ENCODE measurements at regions of chr12 and their contacts with region 1.

Region 1: DNA sequence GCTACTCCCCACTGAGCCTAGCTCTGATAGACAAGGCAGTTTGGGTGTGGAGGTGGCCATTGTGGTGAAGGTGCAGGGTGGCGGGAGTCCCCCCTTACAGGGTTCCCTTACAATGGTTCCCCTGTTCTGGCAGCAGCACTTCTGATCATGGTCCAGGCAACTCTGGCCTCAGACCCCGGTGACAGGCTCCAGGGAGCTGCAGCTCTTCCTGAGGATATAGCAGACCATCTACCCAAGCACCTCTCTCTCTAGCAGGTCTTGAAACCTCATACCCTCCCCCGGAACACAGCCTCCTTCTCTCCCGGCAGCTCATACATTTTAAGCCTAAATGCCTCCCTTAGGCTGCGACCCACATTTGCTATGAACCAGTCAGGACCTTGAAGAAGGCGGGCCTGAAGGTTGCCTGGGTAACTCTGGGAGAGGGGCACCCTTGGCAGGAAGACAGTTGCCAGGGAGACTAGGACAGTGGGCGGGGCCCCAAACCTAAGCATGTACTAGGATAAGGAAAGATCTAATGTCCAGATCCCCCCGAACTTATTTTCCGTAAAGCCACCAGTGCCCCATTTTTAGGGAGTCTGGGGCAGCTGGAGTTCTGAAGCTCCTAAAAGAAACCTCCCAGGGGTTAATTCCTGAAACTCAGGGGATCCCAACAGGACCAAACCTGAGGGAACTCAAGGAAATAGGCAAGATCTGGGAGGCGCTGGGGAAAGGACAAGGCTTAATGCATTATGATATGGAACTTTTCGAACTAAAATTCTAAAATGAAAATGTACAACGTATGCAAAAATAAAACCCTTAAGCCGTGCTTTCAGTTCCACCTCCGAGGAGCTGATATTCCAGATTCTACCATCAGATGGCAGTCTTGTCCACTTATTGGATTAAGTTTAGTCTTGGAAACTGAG is 4.5 kb upstream of the GDF11 start:
- DNase-seq: peak; percentile 51 to 89 (median 81)
- ATAC-seq: peak; percentile 75
- H3K4me3 ChIP-seq: peak overlapping the region; percentile 73 to 80
- H3K4me3 Mint-ChIP-seq: peak overlapping the region; percentile 90
- H3K27ac ChIP-seq: peak overlapping the region; percentile 73 to 87
- H3K27ac Mint-ChIP-seq: peak overlapping the region; percentile 93
- H3K4me1 ChIP-seq: peaks cover 22% of the 10 kb centered on the region
- H3K4me1 Mint-ChIP-seq: peaks cover 24% of the 10 kb centered on the region
- H3K27me3 ChIP-seq: no peaks in the 10 kb centered on the region
- H3K27me3 Mint-ChIP-seq: no peaks in the 10 kb centered on the region
- CTCF ChIP-seq: peak; percentile 90

Region 2: GRCh38 chr12:55548756-55549155 is 189.6 kb before region 1 on chr12:
- CTCF ChIA-PET with region 1: no interaction called
- POLR2A ChIA-PET with region 1: no interaction called
- intact Hi-C with region 1: no loop called
- DNase-seq: no peak
- ATAC-seq: no peak
- H3K4me3 ChIP-seq: no peak overlapping the region
- H3K4me3 Mint-ChIP-seq: no peak overlapping the region
- H3K27ac ChIP-seq: no peak overlapping the region
- H3K27ac Mint-ChIP-seq: no peak overlapping the region
- H3K4me1 ChIP-seq: no peaks in the 10 kb centered on the region
- H3K4me1 Mint-ChIP-seq: no peaks in the 10 kb centered on the region
- H3K27me3 ChIP-seq: peaks cover 0 to 4% of the 10 kb centered on the region in 2 experiments
- H3K27me3 Mint-ChIP-seq: peaks cover 41% of the 10 kb centered on the region
- CTCF ChIP-seq: no peak

Region 3: DNA sequence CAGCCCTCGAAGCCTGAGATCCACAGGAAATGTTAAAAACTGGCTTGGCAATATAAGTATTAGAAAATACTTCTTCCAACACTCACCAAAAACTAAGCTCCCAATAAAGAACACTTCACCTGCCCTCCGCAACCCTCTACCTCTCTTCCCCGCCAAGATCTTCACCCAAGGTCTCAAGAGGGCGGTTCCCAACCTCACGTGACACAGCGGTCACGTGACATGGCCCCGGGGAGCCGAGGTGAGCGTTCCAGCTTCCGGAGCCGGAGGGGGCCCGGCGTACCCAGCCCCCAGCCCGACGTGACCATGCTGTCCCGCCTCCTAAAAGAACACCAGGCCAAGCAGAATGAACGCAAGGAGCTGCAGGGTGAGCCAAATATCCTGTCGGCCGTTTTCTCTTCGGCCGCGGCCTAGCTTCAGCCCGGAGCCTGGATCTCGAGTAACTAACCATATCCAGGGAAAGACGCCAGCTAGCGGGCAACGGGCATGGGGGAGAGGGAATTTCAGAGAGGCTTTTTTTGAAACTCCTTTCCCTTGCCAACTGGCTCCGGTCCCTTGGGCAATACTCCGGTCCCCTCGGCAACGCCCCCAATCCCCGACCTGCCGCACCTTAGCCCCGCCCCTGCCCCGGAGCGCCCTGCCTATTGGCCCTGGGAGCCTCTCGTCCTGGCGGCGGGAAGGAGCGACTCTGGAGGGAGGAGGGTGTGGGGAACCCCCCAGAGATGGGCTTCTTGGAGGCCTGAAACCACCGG is 22.4 kb before region 1 on chr12 and contains the start of gene BLOC1S1:
- CTCF ChIA-PET with region 1: interaction called, 176 read pairs
- POLR2A ChIA-PET with region 1: interaction called, 24 read pairs
- intact Hi-C with region 1: loop called (anchors 1 to 2 kb)
- DNase-seq: peak; percentile 80 to 96 (median 92)
- ATAC-seq: peak; percentile 96
- H3K4me3 ChIP-seq: peak within 1 kb of the TSS; percentile 84 to 90
- H3K4me3 Mint-ChIP-seq: peak within 1 kb of the TSS; percentile 94
- H3K27ac ChIP-seq: peak within 1 kb of the TSS; percentile 67 to 93
- H3K27ac Mint-ChIP-seq: peak within 1 kb of the TSS; percentile 90
- H3K4me1 ChIP-seq: peaks cover 23% of the 10 kb centered on the region
- H3K4me1 Mint-ChIP-seq: peaks cover 36% of the 10 kb centered on the region
- H3K27me3 ChIP-seq: no peaks in the 10 kb centered on the region
- H3K27me3 Mint-ChIP-seq: no peaks in the 10 kb centered on the region
- CTCF ChIP-seq: no peak
- total RNA-seq, gene BLOC1S1: 29.4 to 29.6 TPM

Region 4: GRCh38 chr12:55817346-55818139 is 79.2 kb after region 1 on chr12 and contains the starts of genes ORMDL2 and SARNP:
- CTCF ChIA-PET with region 1: interaction called, 16 read pairs
- POLR2A ChIA-PET with region 1: interaction called, 18 read pairs
- intact Hi-C with region 1: loop called (anchors 1 kb)
- DNase-seq: peak; percentile 88 to 100 (median 94)
- ATAC-seq: peak; percentile 91
- H3K4me3 ChIP-seq: peak within 1 kb of the TSS; percentile 81 to 89
- H3K4me3 Mint-ChIP-seq: no peak within 1 kb of the TSS
- H3K27ac ChIP-seq: peak within 1 kb of the TSS; percentile 81 to 89
- H3K27ac Mint-ChIP-seq: no peak within 1 kb of the TSS
- H3K4me1 ChIP-seq: peaks cover 38% of the 10 kb centered on the region
- H3K4me1 Mint-ChIP-seq: peaks cover 44% of the 10 kb centered on the region
- H3K27me3 ChIP-seq: no peaks in the 10 kb centered on the region
- H3K27me3 Mint-ChIP-seq: no peaks in the 10 kb centered on the region
- CTCF ChIP-seq: no peak
- total RNA-seq, gene ORMDL2: 13.2 to 15.1 TPM
- total RNA-seq, gene SARNP: 48.0 to 50.3 TPM

Region 5: DNA sequence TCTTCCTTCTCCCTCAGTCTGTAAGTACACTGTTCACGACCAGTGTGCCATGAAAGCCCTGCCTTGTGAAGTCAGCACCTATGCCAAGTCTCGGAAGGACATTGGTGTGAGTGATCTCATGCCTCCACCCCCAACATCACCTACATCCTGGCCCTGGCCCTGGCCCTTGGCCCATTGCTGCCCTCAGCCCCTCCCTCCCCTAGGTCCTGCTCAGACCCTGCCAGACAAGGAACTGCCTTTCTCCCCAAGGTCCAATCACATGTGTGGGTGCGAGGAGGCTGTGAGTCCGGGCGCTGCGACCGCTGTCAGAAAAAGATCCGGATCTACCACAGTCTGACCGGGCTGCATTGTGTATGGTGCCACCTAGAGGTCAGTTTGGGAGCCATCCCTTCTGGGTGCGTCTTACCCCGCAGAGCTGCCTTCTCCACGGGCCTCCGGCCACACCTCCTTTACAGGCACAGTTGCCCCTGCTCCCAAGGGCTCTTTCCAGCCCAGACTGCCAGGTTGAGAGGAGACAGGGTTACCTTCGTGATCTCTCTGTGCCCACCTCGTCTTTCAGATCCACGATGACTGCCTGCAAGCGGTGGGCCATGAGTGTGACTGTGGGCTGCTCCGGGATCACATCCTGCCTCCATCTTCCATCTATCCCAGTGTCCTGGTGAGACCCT is 201.8 kb after region 1 on chr12:
- CTCF ChIA-PET with region 1: interaction called, 71 read pairs
- POLR2A ChIA-PET with region 1: interaction called, 5 read pairs
- intact Hi-C with region 1: loop called (anchors 1 kb)
- DNase-seq: peak; percentile 68 to 91 (median 87)
- ATAC-seq: peak; percentile 92
- H3K4me3 ChIP-seq: no peak overlapping the region
- H3K4me3 Mint-ChIP-seq: peak overlapping the region; percentile 52
- H3K27ac ChIP-seq: peak overlapping the region in 1 of 2 experiments; percentile 60
- H3K27ac Mint-ChIP-seq: peak overlapping the region; percentile 87
- H3K4me1 ChIP-seq: peaks cover 55% of the 10 kb centered on the region
- H3K4me1 Mint-ChIP-seq: peaks cover 84% of the 10 kb centered on the region
- H3K27me3 ChIP-seq: no peaks in the 10 kb centered on the region
- H3K27me3 Mint-ChIP-seq: no peaks in the 10 kb centered on the region
- CTCF ChIP-seq: peak; percentile 84

Region 6: DNA sequence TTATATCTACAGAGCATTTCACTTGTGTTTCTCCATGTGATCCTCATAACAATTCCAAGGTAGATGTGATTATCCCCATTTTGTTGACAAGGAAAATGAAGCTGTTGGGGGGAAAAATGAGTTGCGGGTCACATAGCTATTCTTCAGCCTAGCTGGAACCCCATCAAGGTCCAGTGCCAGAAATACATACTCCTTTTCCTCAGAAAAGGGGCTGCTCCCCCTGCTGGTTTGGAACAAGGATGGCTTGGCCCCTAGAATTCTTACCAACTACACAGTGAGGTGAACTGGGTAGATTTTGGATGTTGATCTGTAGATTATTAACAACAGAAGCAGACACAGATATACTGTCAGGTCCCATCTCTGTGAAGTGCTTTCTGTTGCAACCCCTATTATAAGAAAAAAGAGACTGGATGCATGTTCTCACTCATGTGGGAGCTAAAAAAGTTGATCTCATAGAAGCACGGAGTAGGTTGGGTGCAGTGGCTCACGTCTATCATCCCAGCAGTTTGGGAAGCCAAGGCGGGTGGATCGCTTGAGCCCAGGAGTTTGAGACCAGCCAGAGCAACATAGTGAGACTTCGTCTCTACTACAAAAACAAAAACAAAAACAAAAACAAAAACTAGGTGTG is 291.4 kb after region 1 on chr12:
- CTCF ChIA-PET with region 1: interaction called, 9 read pairs
- POLR2A ChIA-PET with region 1: no interaction called
- intact Hi-C with region 1: loop called (anchors 1 to 5 kb)
- DNase-seq: peak in 6 of 9 experiments; percentile 40 to 67 (median 53)
- ATAC-seq: peak; percentile 41
- H3K4me3 ChIP-seq: no peak overlapping the region
- H3K4me3 Mint-ChIP-seq: no peak overlapping the region
- H3K27ac ChIP-seq: no peak overlapping the region
- H3K27ac Mint-ChIP-seq: peak overlapping the region; percentile 73
- H3K4me1 ChIP-seq: peaks cover 23% of the 10 kb centered on the region
- H3K4me1 Mint-ChIP-seq: peaks cover 26% of the 10 kb centered on the region
- H3K27me3 ChIP-seq: no peaks in the 10 kb centered on the region
- H3K27me3 Mint-ChIP-seq: no peaks in the 10 kb centered on the region
- CTCF ChIP-seq: peak; percentile 63

Region 7: GRCh38 chr12:56127888-56128669 is 389.7 kb after region 1 on chr12 and contains the start of gene ESYT1:
- CTCF ChIA-PET with region 1: interaction called, 3 read pairs
- POLR2A ChIA-PET with region 1: no interaction called
- intact Hi-C with region 1: loop called in 1 of 2 experiments (anchors 10 kb)
- DNase-seq: peak; percentile 94 to 100 (median 96)
- ATAC-seq: peak; percentile 87
- H3K4me3 ChIP-seq: peak within 1 kb of the TSS; percentile 71 to 97
- H3K4me3 Mint-ChIP-seq: peak within 1 kb of the TSS; percentile 97
- H3K27ac ChIP-seq: peak within 1 kb of the TSS; percentile 79 to 86
- H3K27ac Mint-ChIP-seq: peak within 1 kb of the TSS; percentile 94
- H3K4me1 ChIP-seq: peaks cover 60% of the 10 kb centered on the region
- H3K4me1 Mint-ChIP-seq: peaks cover 64% of the 10 kb centered on the region
- H3K27me3 ChIP-seq: no peaks in the 10 kb centered on the region
- H3K27me3 Mint-ChIP-seq: no peaks in the 10 kb centered on the region
- CTCF ChIP-seq: no peak
- total RNA-seq, gene ESYT1: 82.4 to 83.0 TPM

Region 8: GRCh38 chr12:56299853-56300643 is 561.7 kb after region 1 on chr12 and contains the start of gene CS:
- CTCF ChIA-PET with region 1: no interaction called
- POLR2A ChIA-PET with region 1: no interaction called
- intact Hi-C with region 1: loop called in 1 of 2 experiments (anchors 1 kb)
- DNase-seq: peak; percentile 97 to 99 (median 99)
- ATAC-seq: peak; percentile 95
- H3K4me3 ChIP-seq: peak within 1 kb of the TSS; percentile 67 to 80
- H3K4me3 Mint-ChIP-seq: peak within 1 kb of the TSS; percentile 95
- H3K27ac ChIP-seq: peak within 1 kb of the TSS; percentile 77 to 95
- H3K27ac Mint-ChIP-seq: peak within 1 kb of the TSS; percentile 94
- H3K4me1 ChIP-seq: peaks cover 45% of the 10 kb centered on the region
- H3K4me1 Mint-ChIP-seq: peaks cover 55% of the 10 kb centered on the region
- H3K27me3 ChIP-seq: no peaks in the 10 kb centered on the region
- H3K27me3 Mint-ChIP-seq: no peaks in the 10 kb centered on the region
- CTCF ChIP-seq: no peak
- total RNA-seq, gene CS: 154 to 159 TPM